ENCODE measurements at regions of chr9 and their contacts with region 1.

Region 1: GRCh38 chr9:73523391-73523790 is 371.7 kb downstream of the ANXA1 start:
- DNase-seq: no peak
- ATAC-seq: no peak
- H3K4me3 Mint-ChIP-seq: no peak overlapping the region
- H3K27ac Mint-ChIP-seq: no peak overlapping the region
- H3K4me1 Mint-ChIP-seq: no peaks in the 10 kb centered on the region
- H3K27me3 Mint-ChIP-seq: no peaks in the 10 kb centered on the region
- CTCF ChIP-seq: no peak

Region 2: DNA sequence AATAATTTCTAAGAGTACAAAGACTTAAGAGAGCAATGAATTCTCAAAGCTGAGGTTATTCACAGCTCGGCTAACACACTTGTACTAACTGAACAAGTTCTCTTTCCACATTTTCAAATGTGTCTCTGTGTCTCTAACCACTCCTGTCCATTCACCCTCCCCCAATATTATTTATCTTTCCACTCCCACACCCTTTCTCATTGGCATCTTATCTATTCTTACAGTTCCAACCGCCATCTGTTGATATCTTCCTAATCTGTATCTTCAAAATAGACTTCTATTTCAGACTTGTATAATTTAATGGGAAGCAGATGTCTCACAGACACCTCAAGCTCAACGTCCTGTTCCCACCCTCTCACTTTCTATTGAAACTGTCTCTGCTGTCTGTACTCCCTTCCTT is 165.8 kb before region 1 on chr9:
- CTCF ChIA-PET with region 1: no interaction called
- POLR2A ChIA-PET with region 1: no interaction called
- intact Hi-C with region 1: no loop called
- DNase-seq: no peak
- ATAC-seq: no peak
- H3K4me3 Mint-ChIP-seq: no peak overlapping the region
- H3K27ac Mint-ChIP-seq: no peak overlapping the region
- H3K4me1 Mint-ChIP-seq: no peaks in the 10 kb centered on the region
- H3K27me3 Mint-ChIP-seq: no peaks in the 10 kb centered on the region
- CTCF ChIP-seq: no peak

Region 3: GRCh38 chr9:73573235-73573634 is 49.8 kb after region 1 on chr9:
- CTCF ChIA-PET with region 1: no interaction called
- POLR2A ChIA-PET with region 1: no interaction called
- intact Hi-C with region 1: loop called (anchors 5 kb)
- DNase-seq: no peak
- ATAC-seq: no peak
- H3K4me3 Mint-ChIP-seq: no peak overlapping the region
- H3K27ac Mint-ChIP-seq: no peak overlapping the region
- H3K4me1 Mint-ChIP-seq: no peaks in the 10 kb centered on the region
- H3K27me3 Mint-ChIP-seq: no peaks in the 10 kb centered on the region
- CTCF ChIP-seq: no peak

Measured in activated B cell treated with CpG ODN at 0.5 μM for 24 hours (primary cell).